ENCODE measurements at regions of chr20 and their contacts with region 1.

Region 1: DNA sequence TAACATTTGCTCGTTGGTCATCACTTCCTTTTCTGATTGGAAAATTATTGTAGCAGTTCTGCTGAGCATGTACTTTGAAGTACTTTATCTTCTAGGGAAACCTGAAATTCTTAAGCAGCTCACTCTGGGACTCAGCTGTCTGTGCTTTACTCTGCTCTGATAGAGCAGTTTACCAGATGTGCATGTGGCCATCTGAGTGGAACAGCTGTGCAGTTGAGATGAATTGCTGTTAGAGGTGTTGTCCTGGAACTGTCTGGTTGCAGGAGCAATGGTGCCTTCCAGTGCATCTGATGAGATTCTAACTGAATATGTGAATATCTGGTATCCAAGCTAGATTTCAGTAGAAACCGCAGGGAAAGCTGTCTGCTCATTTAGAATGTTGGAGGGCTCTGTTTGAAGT is 27.2 kb downstream of the PANK2 start:
- DNase-seq: no peak
- ATAC-seq: no peak

Region 2: DNA sequence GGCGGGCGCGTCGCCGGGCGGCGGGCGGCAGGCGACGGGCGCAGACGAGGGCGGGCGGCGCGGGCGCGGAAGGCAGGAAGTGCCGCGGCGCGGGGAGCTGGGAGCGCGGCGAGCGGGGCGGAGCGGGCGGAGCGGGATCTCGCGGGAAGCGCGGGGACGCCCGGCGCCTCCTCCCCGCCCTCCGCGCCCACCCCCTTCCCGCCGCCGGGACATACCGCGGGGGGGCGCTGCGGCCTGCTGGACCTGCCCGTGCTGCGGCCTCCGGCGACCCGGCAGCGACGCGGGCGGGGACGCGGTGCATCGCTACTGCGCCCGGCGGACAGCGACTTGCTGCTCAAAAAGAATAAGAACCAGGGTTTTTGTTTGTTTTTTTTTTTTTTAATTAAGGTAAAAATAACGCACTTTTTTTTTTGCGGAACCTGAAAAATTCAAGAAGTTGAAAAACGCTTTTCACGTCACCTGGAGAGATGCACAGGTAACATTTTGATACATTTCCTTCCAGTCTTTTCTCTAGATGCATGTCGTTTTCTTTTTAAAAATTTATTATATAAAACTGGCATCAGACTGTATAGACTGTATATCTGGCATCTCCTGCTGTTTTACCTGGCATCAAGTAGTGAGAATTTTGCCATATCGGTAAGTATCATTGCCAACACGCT is 129.6 kb before region 1 on chr20 and contains the start of gene CENPB:
- intact Hi-C with region 1: no loop called
- DNase-seq: peak; percentile 94
- ATAC-seq: peak; percentile 88
- total RNA-seq, gene CENPB: 71.0 TPM

Region 3: GRCh38 chr20:3875378-3875974 is 40.9 kb before region 1 on chr20:
- intact Hi-C with region 1: loop called (anchors 2 kb)
- DNase-seq: no peak
- ATAC-seq: peak; percentile 23

Measured in sciatic nerve (tissue), 2 donors.